K562 (cell line): ENCODE measurements at regions of chr6 and their contacts with region 1.

Region 1: DNA sequence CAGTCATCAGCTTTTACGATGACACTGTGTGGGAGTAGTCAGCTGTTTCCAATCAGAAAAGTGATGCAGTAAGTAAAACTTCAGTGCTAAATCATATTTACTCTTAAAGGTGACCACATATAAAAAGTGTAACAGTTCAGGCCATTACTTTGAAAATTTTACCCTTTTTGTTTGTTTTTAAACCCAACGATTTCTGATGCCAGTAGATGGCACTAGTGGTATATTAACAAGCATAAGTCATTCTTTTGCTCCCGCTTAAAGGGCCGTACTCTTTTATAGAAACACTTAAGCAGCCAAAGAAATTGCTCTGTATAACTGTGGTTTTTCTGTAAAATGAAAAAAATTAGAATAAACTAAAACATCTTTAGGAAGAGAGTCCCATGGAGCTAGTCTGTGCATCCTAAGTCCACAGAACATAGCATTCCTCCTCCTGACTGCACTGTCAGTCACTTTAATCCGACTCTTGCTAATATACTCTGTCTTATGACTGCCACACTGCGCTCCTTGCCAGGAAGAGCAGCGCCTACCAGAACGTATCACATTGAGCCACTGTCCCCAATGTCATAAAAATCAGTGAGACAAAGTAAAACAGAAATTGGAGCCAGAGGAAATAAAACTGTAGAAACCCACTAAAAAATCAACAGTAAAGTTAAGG is 25.0 kb downstream of the HEBP2 start:
- DNase-seq: peak; percentile 33 to 46 (median 40)
- ATAC-seq: peak; percentile 73
- H3K4me3 ChIP-seq: no peak overlapping the region
- H3K27ac ChIP-seq: no peak overlapping the region
- H3K4me1 ChIP-seq: peaks cover 0 to 7% of the 10 kb centered on the region in 2 experiments; a peak in 1 of 5 replicates
- H3K27me3 ChIP-seq: peaks cover 56 to 62% of the 10 kb centered on the region in 2 experiments
- CTCF ChIP-seq: peak; percentile 45 to 82 (median 45); a peak in 4 of 6 replicates
- EP300 ChIP-seq: no peak
- POLR2A ChIP-seq: no peak
- RAD21 ChIP-seq: peak; percentile 74 to 79

Region 2: GRCh38 chr6:138509371-138509770 is 80.3 kb after region 1 on chr6:
- CTCF ChIA-PET with region 1: no interaction called
- POLR2A ChIA-PET with region 1: no interaction called
- in situ Hi-C with region 1: no loop called
- intact Hi-C with region 1: loop called (anchors 1 kb)
- DNase-seq: peak; percentile 16 to 44 (median 24)
- ATAC-seq: peak; percentile 58; the same call in 1 of the 3 replicates
- H3K4me3 ChIP-seq: no peak overlapping the region
- H3K27ac ChIP-seq: no peak overlapping the region
- H3K4me1 ChIP-seq: no peaks in the 10 kb centered on the region
- H3K27me3 ChIP-seq: peaks cover 0 to 6% of the 10 kb centered on the region in 2 experiments; a peak in 2 of 5 replicates
- CTCF ChIP-seq: peak; percentile 45 to 65 (median 62)
- EP300 ChIP-seq: no peak
- POLR2A ChIP-seq: no peak
- RAD21 ChIP-seq: peak; percentile 42 to 65

Region 3: DNA sequence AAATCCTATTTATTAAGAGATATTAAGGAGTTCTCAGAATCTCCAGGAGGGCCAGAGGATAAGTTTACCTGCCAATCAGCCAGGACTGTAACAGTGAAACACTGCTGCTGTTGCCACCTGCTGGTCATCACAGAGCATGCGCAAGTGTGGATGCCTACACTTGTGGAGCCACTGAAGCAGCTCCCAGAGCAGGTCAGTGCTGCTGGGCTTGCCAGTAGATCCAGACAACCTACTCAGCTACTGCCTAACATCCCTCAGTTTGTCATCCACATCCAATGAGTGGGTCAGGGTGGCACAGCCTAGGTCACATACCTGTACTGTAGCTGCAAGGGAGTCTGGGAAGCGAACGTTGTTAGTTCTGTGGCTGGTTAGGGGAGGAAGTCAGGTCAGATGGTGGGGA is 88.6 kb after region 1 on chr6:
- CTCF ChIA-PET with region 1: no interaction called
- POLR2A ChIA-PET with region 1: no interaction called
- in situ Hi-C with region 1: no loop called
- intact Hi-C with region 1: loop called (anchors 5 kb)
- DNase-seq: peak; percentile 25 to 35 (median 31)
- ATAC-seq: peak; percentile 79
- H3K4me3 ChIP-seq: no peak overlapping the region
- H3K27ac ChIP-seq: no peak overlapping the region
- H3K4me1 ChIP-seq: no peaks in the 10 kb centered on the region
- H3K27me3 ChIP-seq: peaks cover 0 to 11% of the 10 kb centered on the region in 2 experiments; a peak in 2 of 5 replicates
- CTCF ChIP-seq: peak; percentile 38 to 61 (median 48); a peak in 5 of 6 replicates
- EP300 ChIP-seq: no peak
- POLR2A ChIP-seq: no peak
- RAD21 ChIP-seq: peak in 1 of 2 experiments; percentile 23; a peak in 1 of 4 replicates

Region 4: GRCh38 chr6:138765896-138766655 is 337.0 kb after region 1 on chr6:
- CTCF ChIA-PET with region 1: interaction called, 3 read pairs
- POLR2A ChIA-PET with region 1: no interaction called
- in situ Hi-C with region 1: no loop called
- intact Hi-C with region 1: loop called (anchors 2 kb)
- DNase-seq: peak; percentile 30 to 63 (median 55)
- ATAC-seq: peak; percentile 57; the same call in 1 of the 3 replicates
- H3K4me3 ChIP-seq: no peak overlapping the region
- H3K27ac ChIP-seq: no peak overlapping the region
- H3K4me1 ChIP-seq: no peaks in the 10 kb centered on the region; a peak in 1 of 5 replicates
- H3K27me3 ChIP-seq: peaks cover 0 to 7% of the 10 kb centered on the region in 2 experiments; a peak in 2 of 5 replicates
- CTCF ChIP-seq: peak in 2 of 3 experiments; percentile 49 to 78; a peak in 4 of 6 replicates
- EP300 ChIP-seq: no peak
- POLR2A ChIP-seq: no peak
- RAD21 ChIP-seq: peak; percentile 74 to 82